OCI-LY7 (cell line): ENCODE measurements at regions of chr5 and their contacts with region 1.

Region 1: DNA sequence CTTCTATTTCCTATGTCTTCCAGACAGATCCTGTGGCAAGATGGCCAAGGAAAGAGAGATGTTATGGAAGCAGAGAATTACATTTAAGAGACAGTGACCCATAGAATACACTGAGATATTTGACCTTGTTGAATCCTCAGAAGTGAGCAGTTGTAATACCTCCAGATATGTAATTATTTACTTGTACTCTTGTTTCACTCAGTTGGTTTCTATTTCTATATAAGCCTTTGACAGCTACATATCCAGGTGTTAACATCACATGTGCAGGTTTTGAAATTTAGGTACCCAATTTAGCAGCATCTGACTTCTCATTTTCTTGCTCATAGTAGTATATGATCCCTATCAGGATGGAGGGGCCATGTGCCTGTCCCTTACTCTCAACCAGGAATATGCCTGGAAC is 269.5 kb downstream of the CD180 start:
- DNase-seq: no peak
- H3K4me3 ChIP-seq: no peak overlapping the region
- H3K27ac ChIP-seq: no peak overlapping the region
- H3K4me1 ChIP-seq: peaks cover 23% of the 10 kb centered on the region
- CTCF ChIP-seq: no peak

Region 2: DNA sequence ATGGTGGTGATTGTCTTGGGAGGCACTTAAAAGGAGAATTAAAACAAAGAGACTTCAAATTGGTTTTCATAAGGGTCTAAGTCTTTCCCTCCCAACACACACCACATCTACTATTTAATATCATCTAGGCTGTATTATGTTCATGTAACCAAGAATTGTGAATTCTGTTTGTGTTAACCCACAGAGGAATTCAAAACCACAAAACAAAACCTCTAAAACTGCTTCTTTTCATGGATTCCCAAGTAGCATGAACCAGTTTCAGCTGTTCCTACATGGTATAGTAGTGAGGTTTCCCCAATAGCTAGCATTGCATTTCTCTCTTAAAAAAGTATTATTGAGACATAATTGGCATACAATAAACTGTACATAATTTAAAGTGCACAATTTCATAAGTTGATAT is 14.4 kb before region 1 on chr5:
- CTCF ChIA-PET with region 1: no interaction called
- POLR2A ChIA-PET with region 1: interaction called, 10 read pairs
- intact Hi-C with region 1: no loop called
- DNase-seq: no peak
- H3K4me3 ChIP-seq: no peak overlapping the region
- H3K27ac ChIP-seq: no peak overlapping the region
- H3K4me1 ChIP-seq: no peaks in the 10 kb centered on the region
- CTCF ChIP-seq: no peak